CD4-positive, alpha-beta memory T cell (primary cell): ENCODE measurements at regions of chr10 and their contacts with region 1.

Region 1: GRCh38 chr10:132307823-132308587 is at the start of gene STK32C:
- DNase-seq: peak; percentile 85 to 89 (median 88)
- H3K4me3 ChIP-seq: peak within 1 kb of the TSS; percentile 6 to 60
- H3K4me3 Mint-ChIP-seq: peak within 1 kb of the TSS; percentile 80 to 91 (median 86)
- H3K27ac ChIP-seq: no peak within 1 kb of the TSS
- H3K27ac Mint-ChIP-seq: peak within 1 kb of the TSS in 5 of 7 donors; percentile 62 to 79 (median 75)
- H3K4me1 ChIP-seq: peaks cover 15% of the 10 kb centered on the region
- H3K4me1 Mint-ChIP-seq: peaks cover 2 to 8% (median 6%) of the 10 kb centered on the region in 4 donors
- H3K27me3 ChIP-seq: no peaks in the 10 kb centered on the region
- H3K27me3 Mint-ChIP-seq: peaks cover 1 to 3% of the 10 kb centered on the region in 2 donors
- total RNA-seq, gene STK32C: 12.8 to 14.7 TPM

Region 2: DNA sequence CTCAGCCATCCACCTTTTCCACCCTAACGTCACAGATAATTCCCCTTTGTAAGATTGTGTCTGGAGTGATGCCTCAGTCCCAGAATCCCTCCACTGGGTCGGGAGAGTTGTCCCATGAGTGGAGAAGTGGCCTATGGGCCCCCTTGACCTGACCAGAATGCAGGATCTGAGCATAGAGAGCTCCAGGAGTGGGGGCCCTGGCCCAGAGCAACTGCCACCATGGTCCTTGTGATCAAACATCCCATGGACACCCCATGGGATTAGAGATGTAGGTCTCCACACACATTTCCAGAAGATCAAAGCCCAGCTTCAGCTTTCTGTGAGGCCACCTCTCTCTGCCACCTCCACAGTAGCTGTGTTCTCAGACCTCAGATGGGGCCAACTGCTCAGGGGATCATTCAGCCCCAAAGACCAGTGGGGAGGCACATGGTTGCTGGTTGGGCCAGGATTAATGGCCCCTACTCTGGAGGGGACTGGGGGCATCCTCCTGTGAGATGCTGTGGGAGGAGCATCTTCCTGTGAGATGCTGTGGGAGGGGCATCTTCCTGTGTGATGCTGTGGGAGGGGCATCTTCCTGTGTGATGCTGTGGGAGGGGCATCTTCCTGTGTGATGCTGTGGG is 149.8 kb before region 1 on chr10:
- CTCF ChIA-PET with region 1: no interaction called
- POLR2A ChIA-PET with region 1: no interaction called
- intact Hi-C with region 1: loop called (anchors 5 kb)
- DNase-seq: peak; percentile 66 to 75 (median 73)
- H3K4me3 ChIP-seq: no peak overlapping the region
- H3K4me3 Mint-ChIP-seq: peak overlapping the region in 4 of 8 donors; percentile 7 to 54 (median 12)
- H3K27ac ChIP-seq: peak overlapping the region; percentile 97
- H3K27ac Mint-ChIP-seq: peak overlapping the region; percentile 93 to 96 (median 94)
- H3K4me1 ChIP-seq: peaks cover 32% of the 10 kb centered on the region
- H3K4me1 Mint-ChIP-seq: peaks cover 14 to 40% (median 33%) of the 10 kb centered on the region in 4 donors
- H3K27me3 ChIP-seq: no peaks in the 10 kb centered on the region
- H3K27me3 Mint-ChIP-seq: no peaks in the 10 kb centered on the region

Region 3: DNA sequence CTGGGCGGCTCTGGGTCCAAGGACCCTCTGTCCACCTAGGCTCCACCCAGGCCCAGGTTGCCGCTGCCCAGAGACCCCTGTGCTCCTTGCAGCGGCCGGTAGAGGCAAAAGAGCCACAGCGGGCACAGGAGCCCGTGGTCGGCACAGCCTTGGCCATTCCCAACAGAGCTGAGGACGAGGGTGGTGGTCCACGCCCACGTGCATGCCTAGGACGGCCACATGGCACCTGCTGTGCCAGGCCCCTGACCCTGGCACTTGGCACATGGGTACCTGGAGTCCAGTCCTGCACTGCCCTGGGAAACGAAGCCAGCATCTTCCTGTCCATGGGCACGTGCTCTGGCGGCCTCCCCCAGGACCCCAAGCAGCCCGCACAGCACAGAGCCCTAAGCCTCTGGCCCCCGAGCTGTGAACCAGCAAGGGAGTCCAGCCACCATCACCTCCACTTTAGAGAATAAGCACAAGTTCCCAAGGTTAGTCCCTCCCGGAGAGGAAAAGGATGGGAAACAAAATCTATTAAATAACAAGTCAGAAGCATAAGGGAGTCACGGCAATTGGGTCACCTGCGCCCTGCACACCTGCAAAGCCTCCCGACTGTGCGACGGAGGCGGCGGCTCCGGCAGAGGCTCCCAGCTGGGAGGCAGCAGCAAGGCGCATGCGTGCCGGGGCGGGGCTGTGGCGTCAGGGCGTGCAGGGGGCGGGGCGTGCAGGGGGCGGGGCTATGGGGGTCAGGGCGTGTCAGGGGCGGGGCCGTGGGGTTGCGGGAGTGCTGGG is 59.4 kb before region 1 on chr10:
- CTCF ChIA-PET with region 1: no interaction called
- POLR2A ChIA-PET with region 1: no interaction called
- intact Hi-C with region 1: loop called (anchors 2 kb)
- DNase-seq: peak; percentile 32 to 69 (median 65)
- H3K4me3 ChIP-seq: no peak overlapping the region
- H3K4me3 Mint-ChIP-seq: peak overlapping the region in 3 of 8 donors; percentile 13 to 70 (median 51)
- H3K27ac ChIP-seq: no peak overlapping the region
- H3K27ac Mint-ChIP-seq: no peak overlapping the region
- H3K4me1 ChIP-seq: no peaks in the 10 kb centered on the region
- H3K4me1 Mint-ChIP-seq: no peaks in the 10 kb centered on the region
- H3K27me3 ChIP-seq: no peaks in the 10 kb centered on the region
- H3K27me3 Mint-ChIP-seq: no peaks in the 10 kb centered on the region

Region 4: GRCh38 chr10:132354356-132355094 is 46.5 kb after region 1 on chr10:
- CTCF ChIA-PET with region 1: interaction called, 3 read pairs
- POLR2A ChIA-PET with region 1: no interaction called
- intact Hi-C with region 1: loop called (anchors 5 kb)
- DNase-seq: no peak
- H3K4me3 ChIP-seq: no peak overlapping the region
- H3K4me3 Mint-ChIP-seq: no peak overlapping the region
- H3K27ac ChIP-seq: no peak overlapping the region
- H3K27ac Mint-ChIP-seq: no peak overlapping the region
- H3K4me1 ChIP-seq: no peaks in the 10 kb centered on the region
- H3K4me1 Mint-ChIP-seq: peaks cover 0 to 8% (median 3%) of the 10 kb centered on the region in 4 donors
- H3K27me3 ChIP-seq: no peaks in the 10 kb centered on the region
- H3K27me3 Mint-ChIP-seq: no peaks in the 10 kb centered on the region

Region 5: GRCh38 chr10:132371641-132372081 is 63.7 kb after region 1 on chr10:
- CTCF ChIA-PET with region 1: no interaction called
- POLR2A ChIA-PET with region 1: no interaction called
- intact Hi-C with region 1: no loop called
- DNase-seq: no peak
- H3K4me3 ChIP-seq: no peak overlapping the region
- H3K4me3 Mint-ChIP-seq: no peak overlapping the region
- H3K27ac ChIP-seq: no peak overlapping the region
- H3K27ac Mint-ChIP-seq: no peak overlapping the region
- H3K4me1 ChIP-seq: no peaks in the 10 kb centered on the region
- H3K4me1 Mint-ChIP-seq: peaks cover 2 to 5% (median 5%) of the 10 kb centered on the region in 4 donors
- H3K27me3 ChIP-seq: no peaks in the 10 kb centered on the region
- H3K27me3 Mint-ChIP-seq: no peaks in the 10 kb centered on the region